WTC11 (cell line): ENCODE measurements at regions of chr4 and their contacts with region 1.

Region 1: GRCh38 chr4:27048429-27049238 is 188.0 kb downstream of the STIM2 start:
- DNase-seq: no peak
- ATAC-seq: 0 out of 2 replicates have a peak, but pooled peaks have one; percentile 22
- H3K4me3 Mint-ChIP-seq: no peak overlapping the region
- H3K27ac Mint-ChIP-seq: no peak overlapping the region
- H3K4me1 Mint-ChIP-seq: peaks cover 16% of the 10 kb centered on the region
- H3K27me3 Mint-ChIP-seq: no peaks in the 10 kb centered on the region
- CTCF ChIP-seq: peak; percentile 45

Region 2: GRCh38 chr4:27096142-27096824 is 47.6 kb after region 1 on chr4:
- CTCF ChIA-PET with region 1: interaction called, 14 read pairs
- POLR2A ChIA-PET with region 1: no interaction called
- DNase-seq: peak; percentile 18
- ATAC-seq: peak; percentile 67
- H3K4me3 Mint-ChIP-seq: no peak overlapping the region; the same call in 1 of the 2 replicates
- H3K27ac Mint-ChIP-seq: peak overlapping the region; percentile 74
- H3K4me1 Mint-ChIP-seq: peaks cover 62% of the 10 kb centered on the region
- H3K27me3 Mint-ChIP-seq: peaks cover 6% of the 10 kb centered on the region
- CTCF ChIP-seq: no peak; the same call in 1 of the 2 replicates

Region 3: GRCh38 chr4:27176400-27176799 is 127.8 kb after region 1 on chr4:
- CTCF ChIA-PET with region 1: interaction called, 11 read pairs
- POLR2A ChIA-PET with region 1: no interaction called
- DNase-seq: peak; percentile 43
- ATAC-seq: peak; percentile 95
- H3K4me3 Mint-ChIP-seq: no peak overlapping the region
- H3K27ac Mint-ChIP-seq: no peak overlapping the region
- H3K4me1 Mint-ChIP-seq: peaks cover 8% of the 10 kb centered on the region; the same call in 1 of the 2 replicates
- H3K27me3 Mint-ChIP-seq: no peaks in the 10 kb centered on the region; the same call in 1 of the 2 replicates
- CTCF ChIP-seq: peak; percentile 15; the same call in 1 of the 2 replicates

Region 4: DNA sequence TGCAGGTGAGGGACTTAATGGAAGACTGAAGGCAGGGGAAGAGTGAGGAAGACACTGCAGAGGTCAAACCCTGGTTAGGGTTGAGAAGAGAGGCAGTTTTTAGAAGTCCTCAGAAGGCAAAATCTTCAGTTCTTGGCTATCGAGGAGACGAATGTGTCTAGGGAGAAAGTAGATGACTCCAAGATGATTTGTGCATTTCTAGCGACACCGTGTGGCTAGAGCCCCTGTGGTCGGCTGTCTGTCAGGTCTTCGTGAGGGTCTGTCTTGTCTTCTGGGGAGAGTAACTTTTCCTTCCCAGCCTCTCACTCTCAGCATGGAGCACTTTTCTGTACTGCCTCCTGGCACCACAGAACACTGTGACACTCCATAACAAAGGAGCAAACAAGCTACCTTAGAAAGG is 270.1 kb after region 1 on chr4:
- CTCF ChIA-PET with region 1: interaction called, 22 read pairs
- POLR2A ChIA-PET with region 1: no interaction called
- DNase-seq: peak; percentile 79
- ATAC-seq: peak; percentile 96
- H3K4me3 Mint-ChIP-seq: no peak overlapping the region
- H3K27ac Mint-ChIP-seq: no peak overlapping the region
- H3K4me1 Mint-ChIP-seq: peaks cover 18% of the 10 kb centered on the region
- H3K27me3 Mint-ChIP-seq: no peaks in the 10 kb centered on the region
- CTCF ChIP-seq: 0 out of 2 replicates have a peak, but pooled peaks have one; percentile 23